Sigmoid colon (tissue), 7 donors: ENCODE measurements at regions of chrX and their contacts with region 1.

Region 1: GRCh38 chrX:2811271-2811670 is 17.5 kb upstream of the GYG2 start:
- DNase-seq: no peak
- H3K4me3 ChIP-seq: no peak overlapping the region
- H3K27ac ChIP-seq: no peak overlapping the region
- H3K4me1 ChIP-seq: peaks cover 0 to 5% (median 0%) of the 10 kb centered on the region in 4 donors
- H3K27me3 ChIP-seq: no peaks in the 10 kb centered on the region
- CTCF ChIP-seq: no peak
- EP300 ChIP-seq: no peak
- POLR2A ChIP-seq: no peak

Region 2: DNA sequence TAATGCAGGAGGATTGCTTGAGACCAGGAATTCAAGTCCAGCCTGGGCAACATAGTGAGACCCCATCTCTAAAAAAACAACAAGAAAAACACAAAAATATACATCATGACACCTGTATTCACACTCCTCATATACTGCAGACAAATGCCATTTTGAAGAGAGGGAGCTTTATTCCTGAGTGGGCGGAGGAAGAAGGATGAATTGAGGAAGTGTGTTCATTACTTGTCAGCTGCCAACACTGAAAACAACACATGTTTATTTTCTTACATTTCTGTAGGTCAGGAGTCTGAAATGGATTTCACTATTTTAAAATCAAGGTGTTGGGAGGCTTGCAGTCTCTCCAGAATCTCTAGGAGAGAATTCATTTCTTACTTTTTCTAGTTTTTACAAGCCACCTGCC is 167.4 kb before region 1 on chrX:
- intact Hi-C with region 1: loop called (anchors 2 kb)
- DNase-seq: no peak
- H3K4me3 ChIP-seq: no peak overlapping the region
- H3K27ac ChIP-seq: no peak overlapping the region
- H3K4me1 ChIP-seq: no peaks in the 10 kb centered on the region
- H3K27me3 ChIP-seq: no peaks in the 10 kb centered on the region
- CTCF ChIP-seq: no peak
- EP300 ChIP-seq: no peak
- POLR2A ChIP-seq: no peak

Region 3: GRCh38 chrX:2707334-2707760 is 103.9 kb before region 1 on chrX:
- intact Hi-C with region 1: loop called (anchors 5 kb)
- DNase-seq: peak; percentile 76
- H3K4me3 ChIP-seq: no peak overlapping the region
- H3K27ac ChIP-seq: peak overlapping the region; percentile 46 to 97 (median 51)
- H3K4me1 ChIP-seq: peaks cover 0 to 97% (median 92%) of the 10 kb centered on the region in 4 donors
- H3K27me3 ChIP-seq: no peaks in the 10 kb centered on the region
- CTCF ChIP-seq: no peak
- EP300 ChIP-seq: peak in 2 of 4 donors; percentile 69 to 77
- POLR2A ChIP-seq: no peak